IMR-90 (cell line): ENCODE measurements at regions of chrX and their contacts with region 1.

Region 1: DNA sequence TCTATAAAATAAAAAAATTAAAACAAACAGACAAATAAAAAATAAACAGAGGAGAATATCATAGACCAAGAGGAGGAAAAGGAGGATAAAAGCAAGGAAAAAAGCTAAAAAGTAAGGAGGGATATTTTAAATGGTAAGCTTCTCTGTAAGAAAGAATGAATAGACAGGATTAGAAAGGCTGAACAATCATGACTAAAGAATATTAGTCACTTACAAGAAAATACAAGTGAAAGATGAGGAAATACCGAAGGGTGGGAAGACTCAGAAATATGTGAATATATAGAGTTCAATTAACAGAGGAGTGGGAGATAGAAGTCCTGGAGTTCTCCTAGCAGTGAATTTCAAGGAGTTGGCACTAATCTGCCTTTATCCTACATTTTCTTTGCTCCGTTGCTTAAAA is 162.6 kb downstream of the RTL3 start:
- DNase-seq: no peak
- ATAC-seq: no peak
- H3K4me3 ChIP-seq: no peak overlapping the region
- H3K27ac ChIP-seq: no peak overlapping the region
- H3K4me1 ChIP-seq: no peaks in the 10 kb centered on the region
- H3K27me3 ChIP-seq: no peaks in the 10 kb centered on the region
- CTCF ChIP-seq: no peak
- POLR2A ChIP-seq: no peak
- RAD21 ChIP-seq: no peak

Region 2: GRCh38 chrX:78452356-78452755 is 44.1 kb before region 1 on chrX:
- CTCF ChIA-PET with region 1: no interaction called
- POLR2A ChIA-PET with region 1: no interaction called
- dilution Hi-C with region 1: no loop called
- in situ Hi-C with region 1: no loop called
- intact Hi-C with region 1: no loop called
- DNase-seq: no peak
- ATAC-seq: no peak
- H3K4me3 ChIP-seq: no peak overlapping the region
- H3K27ac ChIP-seq: no peak overlapping the region
- H3K4me1 ChIP-seq: no peaks in the 10 kb centered on the region
- H3K27me3 ChIP-seq: no peaks in the 10 kb centered on the region
- CTCF ChIP-seq: no peak
- POLR2A ChIP-seq: no peak
- RAD21 ChIP-seq: no peak

Region 3: GRCh38 chrX:79235899-79236298 is 739.4 kb after region 1 on chrX:
- CTCF ChIA-PET with region 1: no interaction called
- POLR2A ChIA-PET with region 1: no interaction called
- dilution Hi-C with region 1: no loop called
- in situ Hi-C with region 1: no loop called
- intact Hi-C with region 1: loop called (anchors 5 kb)
- DNase-seq: no peak
- ATAC-seq: no peak
- H3K4me3 ChIP-seq: no peak overlapping the region
- H3K27ac ChIP-seq: no peak overlapping the region
- H3K4me1 ChIP-seq: no peaks in the 10 kb centered on the region
- H3K27me3 ChIP-seq: no peaks in the 10 kb centered on the region
- CTCF ChIP-seq: no peak
- POLR2A ChIP-seq: no peak
- RAD21 ChIP-seq: no peak